ENCODE measurements at regions of chr14 and their contacts with region 1.

Region 1: GRCh38 chr14:27605282-27605681 is 1007.4 kb upstream of the NOVA1 start:
- DNase-seq: no peak
- H3K4me3 ChIP-seq: no peak overlapping the region
- CTCF ChIP-seq: no peak

Region 2: GRCh38 chr14:27573018-27573417 is 32.3 kb before region 1 on chr14:
- in situ Hi-C with region 1: loop called (anchors 5 kb)
- DNase-seq: no peak
- H3K4me3 ChIP-seq: no peak overlapping the region
- CTCF ChIP-seq: no peak